Activated CD8-positive, alpha-beta memory T cell treated with anti-CD3 and anti-CD28 coated beads, Interleukin-2, amount 10 ng/mL, durations not matched to agents 7 days and 5 days (primary cell): ENCODE measurements at regions of chr16 and their contacts with region 1.

Region 1: GRCh38 chr16:53054670-53055485 is at the start of gene CHD9:
- DNase-seq: peak; percentile 82
- ATAC-seq: peak; percentile 93
- H3K4me3 Mint-ChIP-seq: peak within 1 kb of the TSS; percentile 75
- H3K27ac Mint-ChIP-seq: peak within 1 kb of the TSS; percentile 87
- H3K4me1 Mint-ChIP-seq: peaks cover 52% of the 10 kb centered on the region
- H3K27me3 Mint-ChIP-seq: no peaks in the 10 kb centered on the region
- total RNA-seq, gene CHD9: 23.7 to 32.7 TPM

Region 2: GRCh38 chr16:53099318-53100130 is 44.6 kb after region 1 on chr16:
- CTCF ChIA-PET with region 1: interaction called, 29 read pairs
- DNase-seq: peak; percentile 80
- ATAC-seq: peak; percentile 70
- H3K4me3 Mint-ChIP-seq: peak overlapping the region; percentile 68
- H3K27ac Mint-ChIP-seq: peak overlapping the region; percentile 86
- H3K4me1 Mint-ChIP-seq: peaks cover 29% of the 10 kb centered on the region
- H3K27me3 Mint-ChIP-seq: no peaks in the 10 kb centered on the region

Region 3: GRCh38 chr16:53154513-53154912 is 99.6 kb after region 1 on chr16:
- CTCF ChIA-PET with region 1: interaction called, 52 read pairs
- DNase-seq: no peak
- ATAC-seq: no peak
- H3K4me3 Mint-ChIP-seq: no peak overlapping the region
- H3K27ac Mint-ChIP-seq: no peak overlapping the region
- H3K4me1 Mint-ChIP-seq: no peaks in the 10 kb centered on the region
- H3K27me3 Mint-ChIP-seq: no peaks in the 10 kb centered on the region

Region 4: GRCh38 chr16:53207810-53208752 is 153.2 kb after region 1 on chr16:
- CTCF ChIA-PET with region 1: interaction called, 11 read pairs
- DNase-seq: peak; percentile 42
- ATAC-seq: peak; percentile 69
- H3K4me3 Mint-ChIP-seq: peak overlapping the region; percentile 69
- H3K27ac Mint-ChIP-seq: peak overlapping the region; percentile 82
- H3K4me1 Mint-ChIP-seq: peaks cover 13% of the 10 kb centered on the region
- H3K27me3 Mint-ChIP-seq: no peaks in the 10 kb centered on the region